ENCODE measurements at regions of chr15 and their contacts with region 1.

Region 1: DNA sequence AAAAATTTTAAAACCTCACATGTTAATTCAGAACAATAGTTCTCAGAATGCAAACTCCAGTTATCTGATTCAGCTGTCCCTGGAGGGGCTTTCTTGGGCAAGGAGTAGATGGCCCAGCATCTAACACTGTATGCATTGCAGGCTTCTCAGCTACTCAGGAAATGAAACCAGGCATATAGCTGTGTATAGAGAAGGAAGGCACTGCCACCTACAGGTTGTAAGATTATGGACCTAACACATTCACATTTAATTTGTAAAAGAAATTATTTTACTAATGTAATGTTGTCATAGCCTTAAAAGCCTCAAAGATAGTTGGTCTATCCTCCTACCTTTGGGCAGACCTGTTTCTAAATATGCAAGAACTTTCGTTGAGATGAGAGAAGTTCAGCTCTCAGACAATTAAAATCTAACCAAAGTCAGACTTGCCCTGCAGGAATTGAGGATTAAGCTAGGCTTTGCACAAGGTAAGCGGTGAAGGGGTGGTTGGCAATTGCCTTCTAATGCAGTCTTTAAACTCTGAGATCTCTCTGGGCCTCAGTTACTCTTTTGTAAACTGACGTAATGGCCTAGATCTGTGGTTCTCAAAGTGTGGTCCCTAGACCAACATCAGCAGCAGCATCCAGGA is 132.8 kb upstream of the SLC24A5 start:
- DNase-seq: peak; percentile 52
- H3K4me3 ChIP-seq: no peak overlapping the region
- H3K27ac ChIP-seq: no peak overlapping the region
- H3K4me1 ChIP-seq: peaks cover 5% of the 10 kb centered on the region
- H3K27me3 ChIP-seq: no peaks in the 10 kb centered on the region
- CTCF ChIP-seq: peak; percentile 56 to 75 (median 74)
- POLR2A ChIP-seq: no peak

Region 2: GRCh38 chr15:47196057-47196456 is 792.0 kb before region 1 on chr15:
- intact Hi-C with region 1: loop called (anchors 5 kb)
- DNase-seq: peak; percentile 84
- H3K4me3 ChIP-seq: no peak overlapping the region
- H3K27ac ChIP-seq: no peak overlapping the region
- H3K4me1 ChIP-seq: no peaks in the 10 kb centered on the region
- H3K27me3 ChIP-seq: no peaks in the 10 kb centered on the region
- CTCF ChIP-seq: peak; percentile 71 to 79 (median 75)
- POLR2A ChIP-seq: no peak

Measured in testis (tissue), 5 donors.